ENCODE measurements at regions of chr2 and their contacts with region 1.

Region 1: GRCh38 chr2:171811245-171811628 is 82.8 kb downstream of the SLC25A12 start:
- DNase-seq: no peak
- H3K4me3 ChIP-seq: no peak overlapping the region
- CTCF ChIP-seq: peak; percentile 21

Region 2: DNA sequence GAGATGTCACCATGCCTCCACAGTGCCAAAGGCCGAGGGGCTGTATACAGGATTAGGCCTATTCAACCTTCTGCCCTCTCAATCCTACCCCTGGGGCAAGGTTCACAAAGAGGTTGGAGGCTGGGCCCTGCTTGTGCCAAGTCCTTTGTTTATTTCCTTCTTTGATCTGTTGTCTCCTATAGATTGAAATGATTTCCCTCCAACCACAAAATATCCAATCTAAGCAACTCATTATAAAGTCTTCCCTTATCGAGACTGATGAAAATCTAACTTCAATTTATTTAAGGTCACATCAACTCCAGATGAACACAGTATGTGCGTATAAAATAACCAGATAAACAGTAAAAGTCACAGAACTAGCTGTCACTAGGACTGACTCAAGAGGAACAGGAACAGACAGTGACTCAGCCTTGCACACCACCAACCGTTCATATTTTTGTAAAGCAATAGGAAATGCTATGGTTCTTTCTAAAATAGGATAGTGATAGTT is 12.9 kb before region 1 on chr2:
- CTCF ChIA-PET with region 1: interaction called, 21 read pairs
- POLR2A ChIA-PET with region 1: no interaction called
- DNase-seq: peak; percentile 28
- H3K4me3 ChIP-seq: no peak overlapping the region
- CTCF ChIP-seq: no peak

Region 3: DNA sequence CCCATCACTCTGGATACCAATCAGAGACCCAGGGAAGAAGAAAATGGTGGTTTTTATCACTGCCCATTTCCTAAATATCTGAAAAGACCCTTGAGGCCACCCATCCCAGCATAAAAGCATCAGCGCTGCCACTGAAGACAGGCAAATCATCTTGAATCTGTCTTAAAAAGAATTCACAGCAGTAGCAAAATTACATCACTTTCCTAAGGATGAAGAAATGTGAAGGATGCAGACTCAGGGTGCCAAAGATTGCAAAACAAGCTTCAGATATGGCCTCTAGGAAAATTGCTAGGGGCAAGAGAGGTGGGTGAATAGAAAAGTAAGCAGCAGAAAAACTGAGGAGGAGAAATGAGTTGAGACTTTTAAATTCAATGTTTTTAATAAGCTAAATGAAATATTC is 12.8 kb after region 1 on chr2:
- CTCF ChIA-PET with region 1: interaction called, 18 read pairs
- POLR2A ChIA-PET with region 1: no interaction called
- DNase-seq: peak; percentile 41
- H3K4me3 ChIP-seq: no peak overlapping the region
- CTCF ChIP-seq: no peak

Region 4: GRCh38 chr2:172095146-172095904 is 284.1 kb after region 1 on chr2:
- CTCF ChIA-PET with region 1: interaction called, 10 read pairs
- POLR2A ChIA-PET with region 1: no interaction called
- DNase-seq: peak; percentile 76
- H3K4me3 ChIP-seq: peak overlapping the region; percentile 66
- CTCF ChIP-seq: no peak

Region 5: DNA sequence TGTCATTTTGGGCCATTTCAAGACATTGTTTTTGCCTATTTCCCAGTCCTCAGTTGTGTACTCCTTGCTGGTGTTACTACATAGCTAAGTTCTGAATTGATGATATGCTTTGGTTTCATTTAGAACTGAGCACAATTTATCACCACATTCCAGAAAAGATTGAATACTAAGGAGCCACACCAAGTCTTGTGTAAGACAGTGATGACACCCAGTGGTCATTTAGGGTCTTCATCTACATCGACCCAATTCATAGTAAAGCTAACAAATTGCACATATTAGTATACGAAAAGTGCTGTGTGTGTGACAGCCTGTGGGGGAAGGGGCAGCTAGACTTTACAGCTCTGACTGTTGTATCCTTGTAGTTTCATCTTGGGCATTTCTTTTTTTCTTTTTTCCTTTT is 302.4 kb after region 1 on chr2:
- CTCF ChIA-PET with region 1: interaction called, 250 read pairs
- POLR2A ChIA-PET with region 1: no interaction called
- DNase-seq: no peak
- H3K4me3 ChIP-seq: no peak overlapping the region
- CTCF ChIP-seq: peak; percentile 29

Region 6: DNA sequence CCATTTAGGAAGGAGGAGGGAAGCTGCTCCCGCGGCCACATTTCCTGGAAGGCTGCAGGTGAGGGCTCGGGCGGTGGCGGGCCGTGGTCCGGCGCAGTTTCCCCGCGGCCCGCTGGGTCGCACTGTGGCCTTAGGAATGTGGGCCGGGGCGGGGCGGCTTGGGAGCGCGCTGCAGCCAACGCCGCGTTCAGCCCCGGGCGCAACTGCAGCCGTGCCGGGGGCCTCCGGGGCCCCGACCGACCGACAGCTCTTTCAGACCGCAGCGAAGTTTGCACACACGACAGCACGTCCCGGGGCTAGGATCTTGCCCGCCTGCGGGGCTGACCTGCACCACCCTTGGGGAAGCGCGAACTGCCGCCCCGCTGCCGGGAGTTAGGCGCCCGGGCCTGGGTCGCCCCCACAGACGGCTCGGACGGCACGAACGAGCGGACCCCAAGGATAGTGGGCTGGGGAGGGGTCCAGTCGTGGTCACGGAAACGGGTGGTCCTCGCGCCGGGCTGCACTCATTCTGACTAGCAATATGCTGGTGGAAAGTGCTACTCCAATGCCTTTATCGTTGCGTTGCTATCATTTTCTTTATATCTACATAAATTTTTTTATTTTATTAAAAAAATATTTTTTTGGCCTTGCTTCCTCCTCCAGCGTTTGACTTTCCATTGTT is 361.4 kb after region 1 on chr2:
- CTCF ChIA-PET with region 1: no interaction called
- POLR2A ChIA-PET with region 1: no interaction called
- DNase-seq: no peak
- H3K4me3 ChIP-seq: peak overlapping the region; percentile 70
- CTCF ChIP-seq: peak; percentile 91

Measured in AG04449 (cell line).